Colonic mucosa (tissue), 4 donors: ENCODE measurements at regions of chr7 and their contacts with region 1.

Region 1: GRCh38 chr7:91784463-91784862 is 96.0 kb downstream of the MTERF1 start:
- DNase-seq: no peak
- H3K4me3 ChIP-seq: no peak overlapping the region
- H3K27ac ChIP-seq: no peak overlapping the region
- H3K4me1 ChIP-seq: no peaks in the 10 kb centered on the region
- H3K27me3 ChIP-seq: no peaks in the 10 kb centered on the region
- CTCF ChIP-seq: no peak

Region 2: GRCh38 chr7:91089382-91089963 is 695.0 kb before region 1 on chr7:
- intact Hi-C with region 1: loop called (anchors 10 kb)
- DNase-seq: no peak
- H3K4me3 ChIP-seq: no peak overlapping the region
- H3K27ac ChIP-seq: no peak overlapping the region
- H3K4me1 ChIP-seq: no peaks in the 10 kb centered on the region
- H3K27me3 ChIP-seq: no peaks in the 10 kb centered on the region
- CTCF ChIP-seq: peak; percentile 80

Region 3: GRCh38 chr7:91288208-91288824 is 496.1 kb before region 1 on chr7:
- intact Hi-C with region 1: loop called (anchors 10 kb)
- DNase-seq: peak; percentile 63
- H3K4me3 ChIP-seq: no peak overlapping the region
- H3K27ac ChIP-seq: no peak overlapping the region
- H3K4me1 ChIP-seq: no peaks in the 10 kb centered on the region
- H3K27me3 ChIP-seq: no peaks in the 10 kb centered on the region
- CTCF ChIP-seq: peak; percentile 27

Region 4: DNA sequence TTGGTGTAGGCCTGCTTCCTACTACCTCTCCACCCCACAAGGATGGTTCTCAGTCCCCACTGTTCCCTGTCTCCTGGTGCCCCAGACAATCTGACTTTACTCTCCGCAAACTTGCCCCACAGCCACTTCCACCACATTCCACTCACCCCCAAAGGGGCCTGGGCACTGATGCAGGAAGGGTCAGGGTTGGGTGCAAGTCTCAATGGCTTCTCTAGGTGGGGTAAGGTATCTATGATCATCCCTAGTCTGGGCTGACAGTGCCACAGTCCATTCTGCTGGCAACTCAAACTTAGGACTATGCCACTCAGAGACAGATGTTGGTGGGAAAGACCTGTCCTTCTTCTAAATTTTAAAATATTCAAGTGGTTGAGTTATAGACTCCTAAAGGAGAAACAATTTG is 143.7 kb before region 1 on chr7:
- intact Hi-C with region 1: loop called (anchors 5 kb)
- DNase-seq: no peak
- H3K4me3 ChIP-seq: no peak overlapping the region
- H3K27ac ChIP-seq: no peak overlapping the region
- H3K4me1 ChIP-seq: no peaks in the 10 kb centered on the region
- H3K27me3 ChIP-seq: no peaks in the 10 kb centered on the region
- CTCF ChIP-seq: no peak